ENCODE measurements at regions of chr17 and their contacts with region 1.

Region 1: DNA sequence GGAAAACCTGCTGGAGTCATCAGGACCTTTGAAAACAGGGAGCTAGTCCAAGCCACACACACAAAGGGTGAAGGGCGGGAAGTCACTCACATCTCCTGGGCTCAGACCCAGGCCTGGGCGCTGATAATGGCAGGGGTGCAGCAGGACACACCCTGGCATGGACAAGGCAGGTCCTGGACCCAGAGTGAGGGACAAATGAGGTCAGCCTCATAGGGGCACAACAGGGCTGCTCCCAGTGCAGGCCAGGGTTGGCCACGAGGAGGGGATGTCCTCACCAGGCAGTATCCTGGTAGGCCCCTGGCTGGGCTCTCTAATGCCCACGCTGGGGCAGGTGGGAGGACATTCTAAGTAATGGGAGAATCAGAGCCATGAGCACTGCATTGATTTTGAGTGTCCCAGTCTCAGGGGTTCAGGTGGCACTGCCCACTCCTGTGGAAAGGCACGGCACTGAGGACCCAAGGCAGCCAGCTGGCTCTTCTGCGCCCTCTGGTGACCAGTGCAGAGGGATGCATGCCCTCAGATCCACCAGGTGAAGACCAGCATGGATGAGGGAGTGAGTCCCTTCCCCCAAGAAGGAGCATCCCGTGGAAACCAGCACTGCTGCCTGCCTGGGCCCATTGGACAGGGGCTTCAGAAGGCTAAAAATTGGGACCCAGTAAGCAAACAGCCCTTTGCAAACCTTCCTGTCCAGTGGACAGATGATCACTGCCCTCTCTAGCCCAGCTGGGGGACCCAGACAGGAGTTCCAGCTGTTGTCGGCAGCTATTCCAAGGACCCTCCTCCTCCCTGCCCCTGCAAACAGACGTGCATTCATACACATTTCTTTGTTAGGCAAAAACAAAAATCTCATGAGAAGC is 23.4 kb upstream of the SREBF1 start:
- DNase-seq: peak; percentile 38
- ATAC-seq: peak; percentile 95
- H3K4me3 ChIP-seq: no peak overlapping the region
- H3K27ac ChIP-seq: no peak overlapping the region
- H3K4me1 ChIP-seq: no peaks in the 10 kb centered on the region; the same call in 1 of the 2 replicates
- H3K27me3 ChIP-seq: no peaks in the 10 kb centered on the region
- CTCF ChIP-seq: peak; percentile 89
- POLR2A ChIP-seq: no peak; the same call in 1 of the 2 replicates
- RAD21 ChIP-seq: peak; percentile 93

Region 2: DNA sequence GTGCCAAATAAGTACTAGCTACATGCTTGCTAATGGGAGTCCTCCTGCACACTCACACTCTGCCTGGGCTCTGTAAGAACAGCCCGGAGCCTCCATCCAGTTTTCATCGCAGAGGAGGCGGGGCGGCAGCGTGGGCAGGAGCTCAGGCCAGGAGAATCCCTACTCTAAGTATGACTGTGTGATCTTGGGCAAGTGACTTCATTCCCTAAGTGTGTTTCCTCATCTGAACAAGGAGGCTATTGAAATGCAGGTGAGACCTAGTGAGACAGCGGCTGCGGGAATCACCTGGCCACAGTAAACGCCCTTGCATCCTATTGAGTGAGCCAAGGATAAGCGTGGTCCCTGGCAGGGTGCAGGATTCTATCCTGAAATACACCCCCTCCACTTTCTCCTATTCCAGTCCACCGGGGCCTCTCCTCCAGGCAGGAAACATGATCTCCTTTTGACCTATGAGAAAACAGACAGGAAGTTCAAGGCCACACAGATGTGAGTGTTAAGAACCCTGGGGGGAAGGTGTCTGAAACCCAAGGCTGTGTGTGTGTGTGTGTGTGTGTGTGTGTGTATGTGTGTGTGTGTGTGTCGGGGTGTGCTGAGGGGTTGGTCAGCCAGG is 184.1 kb before region 1 on chr17:
- CTCF ChIA-PET with region 1: interaction called, 4 read pairs
- POLR2A ChIA-PET with region 1: no interaction called
- dilution Hi-C with region 1: no loop called
- in situ Hi-C with region 1: loop called (anchors 5 kb)
- intact Hi-C with region 1: loop called (anchors 1 kb)
- DNase-seq: peak; percentile 52
- ATAC-seq: peak; percentile 52; the same call in 1 of the 2 replicates
- H3K4me3 ChIP-seq: no peak overlapping the region
- H3K27ac ChIP-seq: no peak overlapping the region
- H3K4me1 ChIP-seq: peaks cover 4% of the 10 kb centered on the region; the same call in 1 of the 2 replicates
- H3K27me3 ChIP-seq: peaks cover 4% of the 10 kb centered on the region
- CTCF ChIP-seq: no peak
- POLR2A ChIP-seq: no peak
- RAD21 ChIP-seq: no peak

Region 3: DNA sequence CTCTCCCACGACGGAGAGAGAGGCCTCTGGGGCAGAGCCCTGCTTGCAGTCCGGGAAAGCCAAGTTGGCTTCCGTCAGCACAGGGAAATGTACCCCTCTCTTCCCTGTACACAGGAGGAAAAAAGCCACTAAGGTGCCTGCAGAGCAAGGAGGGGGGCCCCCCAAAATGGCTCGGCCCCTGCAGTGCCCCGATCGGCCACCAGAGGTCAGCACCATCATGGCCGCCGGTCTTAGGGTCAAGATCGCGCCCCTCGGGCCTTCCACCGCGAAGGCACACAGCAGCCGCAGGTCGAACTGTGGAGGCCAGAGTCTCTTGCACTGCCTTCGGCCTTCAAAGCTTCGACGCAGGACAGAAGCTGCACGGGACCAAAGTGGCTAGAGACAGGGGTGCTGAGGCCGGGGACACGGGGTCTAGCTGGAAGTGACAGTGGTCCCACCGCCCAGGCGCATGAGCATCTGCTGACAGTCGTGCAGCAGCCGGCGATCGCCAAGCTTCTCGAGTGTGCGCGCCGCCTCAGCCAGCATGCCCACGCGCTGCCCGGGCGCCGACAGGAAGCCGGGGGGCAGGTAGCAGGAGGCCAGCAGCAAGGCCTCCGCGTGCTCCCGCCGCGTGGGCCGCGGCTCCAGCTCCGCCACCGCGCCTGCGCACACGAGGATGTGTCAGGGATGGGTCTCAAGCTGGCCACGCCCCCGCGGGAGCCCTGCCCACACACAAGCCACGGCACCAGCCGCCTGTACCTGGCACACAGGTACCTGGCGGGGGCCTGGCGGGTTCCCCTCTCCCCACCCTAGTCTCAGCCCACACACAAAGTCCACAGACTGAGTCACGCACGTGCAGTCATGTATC is 47.7 kb before region 1 on chr17:
- CTCF ChIA-PET with region 1: no interaction called
- POLR2A ChIA-PET with region 1: no interaction called
- dilution Hi-C with region 1: no loop called
- in situ Hi-C with region 1: no loop called
- intact Hi-C with region 1: loop called (anchors 1 kb)
- DNase-seq: peak; percentile 41
- ATAC-seq: peak; percentile 67
- H3K4me3 ChIP-seq: no peak overlapping the region
- H3K27ac ChIP-seq: no peak overlapping the region
- H3K4me1 ChIP-seq: peaks cover 9% of the 10 kb centered on the region; the same call in 1 of the 2 replicates
- H3K27me3 ChIP-seq: no peaks in the 10 kb centered on the region
- CTCF ChIP-seq: peak; percentile 89
- POLR2A ChIP-seq: no peak
- RAD21 ChIP-seq: peak; percentile 77

Region 4: GRCh38 chr17:17849845-17850373 is 10.2 kb before region 1 on chr17:
- CTCF ChIA-PET with region 1: no interaction called
- POLR2A ChIA-PET with region 1: no interaction called
- dilution Hi-C with region 1: no loop called
- in situ Hi-C with region 1: no loop called
- intact Hi-C with region 1: no loop called
- DNase-seq: peak; percentile 43
- ATAC-seq: peak; percentile 70
- H3K4me3 ChIP-seq: no peak overlapping the region
- H3K27ac ChIP-seq: peak overlapping the region; percentile 9; the same call in 1 of the 2 replicates
- H3K4me1 ChIP-seq: peaks cover 13% of the 10 kb centered on the region; the same call in 1 of the 2 replicates
- H3K27me3 ChIP-seq: no peaks in the 10 kb centered on the region
- CTCF ChIP-seq: peak; percentile 34
- POLR2A ChIP-seq: no peak
- RAD21 ChIP-seq: no peak

Region 5: DNA sequence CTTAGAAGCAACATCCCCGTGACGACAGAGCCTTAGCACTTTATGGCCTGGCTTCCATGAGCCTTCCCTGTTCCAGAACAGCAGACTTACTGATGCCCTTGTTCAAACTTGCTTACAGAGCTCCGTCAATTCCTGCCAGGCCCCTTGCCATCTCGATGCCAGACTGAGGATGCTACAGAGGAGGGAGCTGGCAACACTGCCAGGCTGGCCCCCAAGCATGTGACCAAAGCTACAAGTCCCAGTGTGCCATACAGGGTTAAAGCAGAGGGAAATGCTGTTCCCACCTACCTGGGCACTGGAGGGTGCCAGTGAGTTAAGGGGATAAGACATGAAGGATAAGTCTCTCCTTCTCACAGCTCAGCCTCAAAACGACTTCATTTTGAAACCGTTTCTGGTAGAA is 10.1 kb after region 1 on chr17:
- CTCF ChIA-PET with region 1: no interaction called
- POLR2A ChIA-PET with region 1: no interaction called
- dilution Hi-C with region 1: no loop called
- in situ Hi-C with region 1: no loop called
- intact Hi-C with region 1: no loop called
- DNase-seq: no peak
- ATAC-seq: no peak
- H3K4me3 ChIP-seq: no peak overlapping the region
- H3K27ac ChIP-seq: no peak overlapping the region
- H3K4me1 ChIP-seq: peaks cover 8% of the 10 kb centered on the region
- H3K27me3 ChIP-seq: no peaks in the 10 kb centered on the region
- CTCF ChIP-seq: no peak
- POLR2A ChIP-seq: no peak
- RAD21 ChIP-seq: no peak

Measured in IMR-90 (cell line).